Activated B cell treated with CpG ODN at 0.5 μM for 24 hours (primary cell): ENCODE measurements at regions of chr12 and their contacts with region 1.

Region 1: DNA sequence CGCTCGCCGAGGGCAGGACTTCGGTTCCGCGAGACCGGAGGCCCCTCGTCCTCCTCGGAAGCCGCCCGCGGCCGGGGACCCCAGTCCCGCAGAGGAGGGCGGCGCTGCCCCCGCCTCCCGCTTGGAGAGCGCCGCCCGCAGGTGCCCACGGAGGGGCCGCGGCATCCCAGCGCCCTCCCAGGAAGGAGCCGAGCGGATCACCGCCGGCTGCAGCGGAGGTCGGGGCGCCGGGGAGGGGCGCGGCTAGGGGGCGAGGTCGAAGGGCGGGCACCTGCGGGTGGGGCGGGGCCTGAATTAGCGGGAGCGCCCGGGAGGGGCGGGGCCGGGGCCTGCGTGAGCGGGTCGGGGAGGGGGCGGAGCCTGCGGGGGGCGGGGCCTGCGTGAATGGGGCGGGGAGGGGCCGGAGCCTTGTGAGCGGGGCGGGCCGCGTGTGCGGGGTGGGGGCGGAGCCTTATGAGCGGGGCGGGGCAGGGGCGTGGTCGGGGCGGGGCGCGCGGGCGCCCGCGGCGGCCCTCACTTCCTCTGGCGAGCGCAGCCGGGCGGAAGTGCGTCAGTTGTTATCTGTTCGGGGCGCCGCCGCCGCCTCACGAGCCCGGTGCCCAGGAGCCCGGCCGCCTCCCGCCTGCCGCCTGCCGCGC is at the start of gene FBRSL1:
- DNase-seq: peak; percentile 83
- ATAC-seq: peak; percentile 82
- H3K4me3 Mint-ChIP-seq: peak within 1 kb of the TSS; percentile 84
- H3K27ac Mint-ChIP-seq: peak within 1 kb of the TSS; percentile 92
- H3K4me1 Mint-ChIP-seq: peaks cover 64% of the 10 kb centered on the region
- H3K27me3 Mint-ChIP-seq: no peaks in the 10 kb centered on the region
- CTCF ChIP-seq: no peak
- total RNA-seq, gene FBRSL1: 50.3 and 58.7 TPM in 2 replicates

Region 2: DNA sequence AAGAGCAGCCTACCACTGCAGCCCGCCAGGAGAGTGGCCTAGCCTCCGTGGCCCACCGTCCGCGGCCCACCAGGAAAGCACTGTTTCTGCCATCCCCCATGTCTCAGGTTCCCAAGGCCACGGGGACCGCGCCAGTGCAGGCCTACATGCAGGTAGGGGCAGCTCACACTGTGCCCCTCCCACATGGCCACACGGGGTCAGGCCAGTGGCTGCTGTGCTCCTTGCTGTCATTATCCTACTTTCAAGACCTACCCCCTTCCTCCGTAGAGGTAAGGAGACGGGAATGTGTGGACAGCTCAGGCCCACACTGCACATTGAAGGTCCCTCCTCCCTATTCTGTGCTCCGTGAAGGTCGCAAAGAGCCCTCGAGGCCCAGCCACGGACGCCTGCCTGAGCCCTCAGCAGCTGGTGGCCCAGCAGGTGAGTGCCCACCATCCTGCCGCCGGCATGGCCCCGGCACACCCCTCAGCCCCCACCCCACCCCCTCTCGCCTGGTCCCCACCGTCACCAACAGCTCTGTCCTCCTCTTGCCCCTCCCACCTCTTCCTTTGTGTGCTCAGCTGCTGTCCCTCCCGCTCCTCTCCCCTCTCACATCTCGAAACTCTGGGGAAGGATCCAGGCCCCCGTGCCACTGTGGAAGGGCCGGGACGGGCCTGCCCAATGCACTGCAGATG is 355.6 kb before region 1 on chr12:
- CTCF ChIA-PET with region 1: no interaction called
- POLR2A ChIA-PET with region 1: no interaction called
- intact Hi-C with region 1: no loop called
- DNase-seq: no peak
- ATAC-seq: no peak
- H3K4me3 Mint-ChIP-seq: no peak overlapping the region
- H3K27ac Mint-ChIP-seq: no peak overlapping the region
- H3K4me1 Mint-ChIP-seq: no peaks in the 10 kb centered on the region
- H3K27me3 Mint-ChIP-seq: no peaks in the 10 kb centered on the region
- CTCF ChIP-seq: no peak

Region 3: GRCh38 chr12:132189378-132190011 is 300.2 kb before region 1 on chr12:
- CTCF ChIA-PET with region 1: no interaction called
- POLR2A ChIA-PET with region 1: no interaction called
- intact Hi-C with region 1: loop called (anchors 1 kb)
- DNase-seq: peak; percentile 85
- ATAC-seq: peak; percentile 97
- H3K4me3 Mint-ChIP-seq: peak overlapping the region; percentile 85
- H3K27ac Mint-ChIP-seq: peak overlapping the region; percentile 59
- H3K4me1 Mint-ChIP-seq: peaks cover 16% of the 10 kb centered on the region
- H3K27me3 Mint-ChIP-seq: peaks cover 2% of the 10 kb centered on the region
- CTCF ChIP-seq: no peak

Region 4: GRCh38 chr12:132445884-132446632 is 43.7 kb before region 1 on chr12:
- CTCF ChIA-PET with region 1: no interaction called
- POLR2A ChIA-PET with region 1: interaction called, 9 read pairs
- intact Hi-C with region 1: loop called (anchors 1 kb)
- DNase-seq: no peak
- ATAC-seq: peak; percentile 9
- H3K4me3 Mint-ChIP-seq: peak overlapping the region; percentile 66
- H3K27ac Mint-ChIP-seq: peak overlapping the region; percentile 98
- H3K4me1 Mint-ChIP-seq: peaks cover 63% of the 10 kb centered on the region
- H3K27me3 Mint-ChIP-seq: no peaks in the 10 kb centered on the region
- CTCF ChIP-seq: no peak

Region 5: GRCh38 chr12:132506328-132507160 is 16.8 kb after region 1 on chr12:
- CTCF ChIA-PET with region 1: no interaction called
- POLR2A ChIA-PET with region 1: interaction called, 3 read pairs
- intact Hi-C with region 1: loop called (anchors 2 kb)
- DNase-seq: peak; percentile 34
- ATAC-seq: peak; percentile 69
- H3K4me3 Mint-ChIP-seq: peak overlapping the region; percentile 44
- H3K27ac Mint-ChIP-seq: peak overlapping the region; percentile 6
- H3K4me1 Mint-ChIP-seq: peaks cover 50% of the 10 kb centered on the region
- H3K27me3 Mint-ChIP-seq: no peaks in the 10 kb centered on the region
- CTCF ChIP-seq: no peak

Region 6: DNA sequence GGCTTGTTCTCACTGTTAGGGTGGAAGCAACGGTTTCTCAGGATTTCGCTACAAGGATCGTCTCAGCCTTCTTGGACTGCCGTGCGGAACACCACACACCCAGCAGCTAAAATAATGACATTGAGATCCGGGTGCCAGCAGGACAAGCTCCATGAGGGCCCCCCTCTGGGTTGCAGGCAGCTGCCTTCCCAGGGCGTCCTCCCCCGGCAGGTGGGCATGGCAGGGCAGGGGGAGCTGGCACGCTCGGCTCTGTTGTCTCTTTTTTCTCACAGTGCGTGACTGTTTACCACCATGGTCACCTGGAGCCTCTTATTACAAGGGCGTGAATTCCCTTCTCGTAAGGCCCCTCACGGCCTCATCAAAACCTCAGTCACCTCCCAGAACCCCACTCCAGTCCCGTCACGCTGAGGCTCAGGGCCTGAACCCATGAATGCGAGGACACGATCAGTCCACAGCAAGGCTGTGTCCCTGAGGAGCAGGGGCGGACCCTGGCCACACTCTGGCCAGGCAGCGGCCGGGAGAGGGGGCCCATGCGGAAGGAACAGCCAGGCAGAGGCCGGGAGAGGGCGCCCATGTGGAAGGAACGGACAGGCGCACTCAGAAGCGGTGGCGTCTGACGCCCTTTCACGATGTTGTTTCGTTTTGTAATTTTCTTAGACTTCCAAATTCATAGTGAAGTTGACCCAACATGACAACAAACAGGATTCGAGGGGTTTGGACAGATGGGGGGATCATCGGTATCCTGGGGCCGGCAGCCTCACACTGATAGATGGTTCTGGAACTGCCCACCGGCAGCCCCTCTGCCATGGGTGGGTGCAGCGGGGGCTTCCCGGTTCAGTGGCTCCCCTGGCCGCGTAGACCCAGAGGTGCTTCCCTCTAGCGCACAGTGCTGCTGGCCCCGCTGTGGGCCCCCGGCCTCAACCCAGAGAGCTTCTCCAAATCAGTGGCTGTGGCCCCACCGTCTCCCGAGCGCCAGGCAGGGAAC is 110.6 kb after region 1 on chr12:
- CTCF ChIA-PET with region 1: no interaction called
- POLR2A ChIA-PET with region 1: no interaction called
- intact Hi-C with region 1: loop called (anchors 5 kb)
- DNase-seq: no peak
- ATAC-seq: peak; percentile 57
- H3K4me3 Mint-ChIP-seq: peak overlapping the region; percentile 79
- H3K27ac Mint-ChIP-seq: no peak overlapping the region
- H3K4me1 Mint-ChIP-seq: peaks cover 27% of the 10 kb centered on the region
- H3K27me3 Mint-ChIP-seq: peaks cover 18% of the 10 kb centered on the region
- CTCF ChIP-seq: no peak